GM23248 (cell line): ENCODE measurements at regions of chr2 and their contacts with region 1.

Region 1: GRCh38 chr2:55718165-55719008 is 24.7 kb upstream of the PNPT1 start:
- DNase-seq: peak; percentile 84
- H3K4me3 ChIP-seq: no peak overlapping the region
- H3K27ac ChIP-seq: no peak overlapping the region
- H3K4me1 ChIP-seq: peaks cover 9% of the 10 kb centered on the region
- H3K27me3 ChIP-seq: no peaks in the 10 kb centered on the region

Region 2: DNA sequence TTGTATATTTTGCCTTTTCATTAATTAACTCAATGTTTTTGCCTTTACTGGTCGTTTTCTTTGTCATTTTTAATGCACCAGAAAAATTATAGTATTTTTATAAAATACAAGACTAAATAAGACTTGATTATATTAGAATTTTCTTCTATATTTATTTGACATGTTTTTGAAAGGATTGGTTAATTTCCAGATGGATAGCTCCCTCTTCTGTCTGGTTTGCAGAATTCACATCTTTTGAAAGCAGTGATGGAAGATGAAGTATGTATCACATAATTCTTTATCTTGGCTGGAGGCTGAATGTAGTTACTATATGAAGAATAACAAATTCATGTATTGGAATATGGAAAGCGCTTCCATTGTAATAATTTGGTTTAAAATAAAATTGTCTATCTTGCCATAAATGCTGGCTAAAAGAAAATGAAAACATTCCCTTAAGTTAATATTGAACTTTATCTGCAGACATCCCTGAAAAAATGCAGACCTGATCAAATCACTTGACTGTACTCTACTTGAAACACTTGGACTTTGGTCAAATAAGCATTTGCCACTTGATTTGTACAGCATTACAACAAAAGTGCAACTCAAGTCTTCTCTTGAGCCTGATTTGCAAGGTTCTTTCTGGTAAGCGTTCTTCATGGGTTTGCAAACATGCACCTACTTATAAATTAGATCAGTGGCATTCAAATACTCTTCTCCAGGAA is 291.5 kb after region 1 on chr2:
- in situ Hi-C with region 1: loop called (anchors 10 kb)
- DNase-seq: peak; percentile 75
- H3K4me3 ChIP-seq: peak overlapping the region; percentile 35
- H3K27ac ChIP-seq: peak overlapping the region; percentile 84
- H3K4me1 ChIP-seq: peaks cover 17% of the 10 kb centered on the region
- H3K27me3 ChIP-seq: no peaks in the 10 kb centered on the region

Region 3: DNA sequence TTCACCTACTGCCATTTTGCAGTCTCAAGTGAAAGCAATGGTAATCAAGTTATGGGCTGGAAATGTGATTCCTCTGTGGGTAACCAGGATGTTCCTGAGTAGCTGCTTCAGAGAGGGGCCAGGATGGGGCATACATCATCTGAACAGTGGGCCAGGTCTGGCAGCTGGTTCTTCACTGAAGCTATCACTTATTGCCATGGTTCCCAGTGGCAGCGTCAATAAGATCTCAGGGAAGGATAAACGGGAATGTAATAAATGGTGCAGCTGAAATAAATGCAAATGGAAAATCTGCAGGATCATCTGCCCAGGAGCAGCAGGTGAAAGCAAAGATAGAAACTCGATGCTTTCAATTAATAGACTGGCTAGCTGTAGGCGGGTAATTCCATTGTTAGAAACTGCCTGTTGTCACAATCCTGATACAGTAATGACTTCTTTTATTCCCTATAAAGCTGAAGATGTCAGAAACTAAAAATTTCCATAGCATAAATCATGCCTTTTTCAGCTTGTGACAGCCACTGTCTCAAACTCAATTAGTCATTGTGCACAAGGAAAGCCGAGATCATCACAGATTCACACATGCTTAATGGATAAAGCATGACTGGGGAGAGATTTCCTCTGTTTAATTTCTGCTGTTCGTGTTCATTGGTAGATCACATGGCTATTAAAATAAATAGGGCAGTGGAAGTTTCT is 409.2 kb after region 1 on chr2:
- in situ Hi-C with region 1: loop called (anchors 10 kb)
- DNase-seq: peak; percentile 23
- H3K4me3 ChIP-seq: no peak overlapping the region
- H3K27ac ChIP-seq: no peak overlapping the region
- H3K4me1 ChIP-seq: no peaks in the 10 kb centered on the region
- H3K27me3 ChIP-seq: peaks cover 23% of the 10 kb centered on the region; the same call in 1 of the 2 replicates